Endothelial cell of umbilical vein (primary cell): ENCODE measurements at regions of chr1 and their contacts with region 1.

Region 1: DNA sequence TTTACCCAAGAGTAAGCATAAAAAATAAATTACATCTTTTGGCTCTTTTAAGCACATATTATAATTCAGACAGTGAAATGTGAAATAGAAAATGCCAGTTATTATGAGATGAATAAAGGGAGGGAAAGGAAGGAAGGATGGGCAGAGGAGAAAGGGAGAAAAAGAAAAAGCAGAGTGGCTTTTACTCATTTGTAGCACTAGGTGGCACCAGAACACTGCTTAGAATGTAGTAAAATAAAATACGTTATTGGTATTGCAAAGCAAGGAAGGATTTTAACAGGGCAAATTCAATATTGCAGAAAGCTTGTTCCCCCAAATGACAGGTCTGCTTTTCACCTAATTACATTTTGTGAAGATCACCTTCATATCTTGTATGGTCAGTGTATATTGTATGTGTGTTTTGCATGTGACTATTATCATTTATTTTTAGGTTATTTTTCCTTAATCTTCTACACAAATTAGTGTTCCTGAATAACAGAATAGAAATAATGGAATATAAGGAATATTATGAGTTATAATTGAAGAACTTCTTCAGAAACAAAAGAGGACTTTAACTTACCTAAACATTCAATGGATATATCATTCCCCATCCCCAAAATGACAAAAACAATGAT is 9.1 kb upstream of the PCNX2 start:
- DNase-seq: peak; percentile 35
- H3K4me3 ChIP-seq: no peak overlapping the region
- H3K27ac ChIP-seq: no peak overlapping the region
- H3K4me1 ChIP-seq: no peaks in the 10 kb centered on the region
- H3K27me3 ChIP-seq: peaks cover 4 to 12% of the 10 kb centered on the region in 2 experiments
- CTCF ChIP-seq: peak; percentile 48 to 65
- POLR2A ChIP-seq: no peak

Region 2: DNA sequence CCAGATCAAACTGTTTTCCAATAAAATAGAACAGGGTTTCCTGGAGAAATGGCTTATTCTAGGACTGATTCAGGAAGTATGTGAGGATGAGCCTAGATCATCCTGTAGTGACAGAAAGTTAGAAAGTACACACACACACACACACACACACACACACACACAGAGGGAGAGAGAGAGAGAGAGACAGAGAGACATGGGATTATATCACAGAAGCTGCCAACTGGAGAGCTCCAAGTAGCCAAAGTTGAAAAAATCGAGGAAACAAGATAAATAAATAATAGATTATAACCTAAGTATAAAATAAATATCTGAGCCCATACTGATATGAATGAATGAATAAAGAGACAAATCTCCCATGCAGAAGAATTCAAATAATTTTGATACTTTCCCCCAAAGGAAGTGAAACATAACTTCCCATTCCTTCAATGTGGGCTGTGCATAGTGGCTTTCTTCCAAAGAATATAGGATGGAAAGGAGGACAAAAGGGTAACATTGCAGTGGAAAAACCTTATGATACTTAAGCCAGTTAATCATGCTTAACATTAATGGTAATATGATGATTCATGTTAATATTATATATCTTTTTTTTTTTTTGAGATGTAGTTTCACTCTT is 182.5 kb before region 1 on chr1:
- CTCF ChIA-PET with region 1: no interaction called
- POLR2A ChIA-PET with region 1: no interaction called
- dilution Hi-C with region 1: no loop called
- intact Hi-C with region 1: no loop called
- DNase-seq: peak; percentile 92
- H3K4me3 ChIP-seq: no peak overlapping the region
- H3K27ac ChIP-seq: peak overlapping the region; percentile 8
- H3K4me1 ChIP-seq: peaks cover 5% of the 10 kb centered on the region
- H3K27me3 ChIP-seq: no peaks in the 10 kb centered on the region
- CTCF ChIP-seq: no peak
- POLR2A ChIP-seq: no peak

Region 3: GRCh38 chr1:233315718-233316301 is 11.2 kb after region 1 on chr1:
- CTCF ChIA-PET with region 1: interaction called, 21 read pairs
- POLR2A ChIA-PET with region 1: no interaction called
- dilution Hi-C with region 1: no loop called
- intact Hi-C with region 1: no loop called
- DNase-seq: peak; percentile 8
- H3K4me3 ChIP-seq: no peak overlapping the region
- H3K27ac ChIP-seq: no peak overlapping the region
- H3K4me1 ChIP-seq: no peaks in the 10 kb centered on the region
- H3K27me3 ChIP-seq: peaks cover 0 to 12% of the 10 kb centered on the region in 2 experiments
- CTCF ChIP-seq: no peak
- POLR2A ChIP-seq: no peak

Region 4: GRCh38 chr1:233364695-233365539 is 60.3 kb after region 1 on chr1:
- CTCF ChIA-PET with region 1: interaction called, 3 read pairs
- POLR2A ChIA-PET with region 1: no interaction called
- dilution Hi-C with region 1: no loop called
- intact Hi-C with region 1: loop called (anchors 1 kb)
- DNase-seq: peak; percentile 21
- H3K4me3 ChIP-seq: no peak overlapping the region
- H3K27ac ChIP-seq: no peak overlapping the region
- H3K4me1 ChIP-seq: no peaks in the 10 kb centered on the region
- H3K27me3 ChIP-seq: no peaks in the 10 kb centered on the region
- CTCF ChIP-seq: peak; percentile 35 to 41
- POLR2A ChIP-seq: no peak

Region 5: DNA sequence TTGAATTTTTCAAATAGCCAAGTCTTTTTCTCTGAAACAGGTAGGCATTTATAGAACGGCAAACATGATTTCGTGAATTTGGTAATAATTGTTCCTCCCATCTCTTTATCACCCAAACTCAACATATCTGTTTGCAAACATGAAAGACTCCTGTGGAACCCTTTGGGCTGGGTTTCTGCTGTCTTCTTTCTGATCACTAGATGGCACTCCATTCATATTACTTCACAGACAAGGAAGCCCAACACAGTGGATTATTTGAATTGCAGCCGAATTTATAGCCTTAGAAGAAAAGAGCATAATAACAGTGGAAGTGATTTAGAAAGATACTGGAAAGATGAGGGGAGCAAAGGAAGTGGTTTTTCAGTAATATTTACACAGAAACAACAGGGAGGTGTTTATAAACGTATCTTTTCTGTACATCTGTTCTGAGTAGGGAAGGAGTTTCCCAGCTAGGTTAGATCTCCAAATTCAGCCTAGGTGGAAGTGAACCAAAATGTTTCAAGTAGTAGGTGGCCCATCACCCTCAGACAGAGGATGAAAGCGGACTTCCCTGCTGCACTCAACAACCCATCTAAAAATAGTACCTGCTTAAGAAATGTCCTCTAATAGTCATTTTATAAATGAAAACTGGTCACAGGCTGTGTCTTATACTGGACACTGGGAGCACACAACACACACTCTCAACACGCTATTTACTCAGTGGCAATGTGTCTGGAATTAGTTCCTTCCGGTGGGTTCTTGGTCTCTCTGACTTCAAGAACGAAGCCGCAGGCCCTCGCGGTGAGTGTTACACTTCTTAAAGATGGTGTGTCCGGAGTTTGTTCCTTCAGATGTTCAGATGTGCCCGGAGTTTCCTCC is 90.5 kb after region 1 on chr1:
- CTCF ChIA-PET with region 1: no interaction called
- POLR2A ChIA-PET with region 1: no interaction called
- dilution Hi-C with region 1: no loop called
- intact Hi-C with region 1: loop called (anchors 10 kb)
- DNase-seq: peak; percentile 59
- H3K4me3 ChIP-seq: no peak overlapping the region
- H3K27ac ChIP-seq: no peak overlapping the region
- H3K4me1 ChIP-seq: no peaks in the 10 kb centered on the region
- H3K27me3 ChIP-seq: peaks cover 0 to 2% of the 10 kb centered on the region in 2 experiments
- CTCF ChIP-seq: peak; percentile 40 to 64
- POLR2A ChIP-seq: no peak

Region 6: DNA sequence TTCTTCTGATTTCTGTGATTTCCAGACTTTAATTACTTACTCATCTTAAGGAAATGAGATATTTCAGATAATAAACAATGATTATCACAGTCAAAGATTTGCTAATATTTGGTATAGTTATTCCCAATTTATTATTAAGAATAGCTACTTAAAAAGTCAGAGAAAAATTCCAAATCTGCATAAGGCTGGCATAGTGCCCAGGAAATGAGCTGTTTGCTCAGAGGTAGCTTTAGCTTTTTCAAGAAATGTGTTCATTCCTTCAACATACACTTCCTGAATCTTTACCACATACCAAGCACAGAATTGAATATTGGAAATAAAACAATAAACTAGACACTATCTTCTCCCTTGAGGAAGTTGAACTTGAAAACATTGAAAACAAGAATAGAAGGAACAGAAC is 265.0 kb after region 1 on chr1:
- CTCF ChIA-PET with region 1: no interaction called
- POLR2A ChIA-PET with region 1: no interaction called
- dilution Hi-C with region 1: no loop called
- intact Hi-C with region 1: no loop called
- DNase-seq: no peak
- H3K4me3 ChIP-seq: no peak overlapping the region
- H3K27ac ChIP-seq: no peak overlapping the region
- H3K4me1 ChIP-seq: no peaks in the 10 kb centered on the region
- H3K27me3 ChIP-seq: no peaks in the 10 kb centered on the region
- CTCF ChIP-seq: no peak
- POLR2A ChIP-seq: no peak

Region 7: DNA sequence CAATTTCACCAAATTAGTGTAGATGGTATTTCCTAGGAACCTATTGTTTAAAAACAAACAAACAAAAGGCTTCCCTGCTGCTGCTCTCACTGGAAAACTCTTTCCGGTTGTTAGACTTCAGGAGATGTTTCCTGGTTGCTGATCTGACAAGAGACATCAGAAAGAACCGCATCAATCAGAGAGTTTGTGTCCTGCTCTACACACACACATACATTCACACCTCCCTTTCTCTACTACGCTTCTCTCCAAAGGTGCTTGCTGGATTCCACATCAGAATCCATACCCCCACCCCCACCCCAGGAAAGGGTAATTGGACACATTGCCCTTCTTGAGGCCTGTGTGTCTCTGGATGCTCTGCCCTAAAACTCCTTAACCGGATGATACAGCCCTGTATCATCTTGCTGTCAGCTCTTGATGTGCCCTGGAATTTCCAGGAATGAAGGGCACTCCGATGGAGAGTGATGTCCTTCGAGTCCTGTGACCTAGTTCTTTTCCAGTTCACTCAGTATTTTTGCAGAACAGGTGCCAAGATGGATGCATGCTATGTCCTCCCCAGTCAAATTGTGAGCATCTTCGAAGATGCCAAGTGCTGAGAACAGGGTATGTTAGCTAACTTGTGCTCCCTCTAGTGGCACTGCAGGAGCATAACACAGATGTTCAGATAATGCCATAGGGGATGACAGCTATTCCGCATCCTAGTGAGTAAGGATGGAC is 486.2 kb after region 1 on chr1:
- CTCF ChIA-PET with region 1: interaction called, 14 read pairs
- POLR2A ChIA-PET with region 1: no interaction called
- dilution Hi-C with region 1: no loop called
- intact Hi-C with region 1: no loop called
- DNase-seq: peak; percentile 41
- H3K4me3 ChIP-seq: no peak overlapping the region
- H3K27ac ChIP-seq: no peak overlapping the region
- H3K4me1 ChIP-seq: no peaks in the 10 kb centered on the region
- H3K27me3 ChIP-seq: no peaks in the 10 kb centered on the region
- CTCF ChIP-seq: peak; percentile 72 to 75
- POLR2A ChIP-seq: no peak

Region 8: GRCh38 chr1:234065794-234066447 is 761.3 kb after region 1 on chr1:
- CTCF ChIA-PET with region 1: interaction called, 75 read pairs
- POLR2A ChIA-PET with region 1: no interaction called
- dilution Hi-C with region 1: no loop called
- intact Hi-C with region 1: loop called (anchors 1 kb)
- DNase-seq: peak; percentile 52
- H3K4me3 ChIP-seq: no peak overlapping the region
- H3K27ac ChIP-seq: no peak overlapping the region
- H3K4me1 ChIP-seq: no peaks in the 10 kb centered on the region
- H3K27me3 ChIP-seq: no peaks in the 10 kb centered on the region
- CTCF ChIP-seq: peak; percentile 62 to 77
- POLR2A ChIP-seq: no peak

Region 9: GRCh38 chr1:234309598-234310459 is 1005.2 kb after region 1 on chr1:
- CTCF ChIA-PET with region 1: interaction called, 9 read pairs
- POLR2A ChIA-PET with region 1: no interaction called
- dilution Hi-C with region 1: no loop called
- intact Hi-C with region 1: loop called (anchors 10 kb)
- DNase-seq: peak; percentile 43
- H3K4me3 ChIP-seq: no peak overlapping the region
- H3K27ac ChIP-seq: no peak overlapping the region
- H3K4me1 ChIP-seq: peaks cover 2% of the 10 kb centered on the region
- H3K27me3 ChIP-seq: peaks cover 0 to 3% of the 10 kb centered on the region in 2 experiments
- CTCF ChIP-seq: peak; percentile 91 to 92
- POLR2A ChIP-seq: no peak